Sigmoid colon (tissue), 7 donors: ENCODE measurements at regions of chr11 and their contacts with region 1.

Region 1: DNA sequence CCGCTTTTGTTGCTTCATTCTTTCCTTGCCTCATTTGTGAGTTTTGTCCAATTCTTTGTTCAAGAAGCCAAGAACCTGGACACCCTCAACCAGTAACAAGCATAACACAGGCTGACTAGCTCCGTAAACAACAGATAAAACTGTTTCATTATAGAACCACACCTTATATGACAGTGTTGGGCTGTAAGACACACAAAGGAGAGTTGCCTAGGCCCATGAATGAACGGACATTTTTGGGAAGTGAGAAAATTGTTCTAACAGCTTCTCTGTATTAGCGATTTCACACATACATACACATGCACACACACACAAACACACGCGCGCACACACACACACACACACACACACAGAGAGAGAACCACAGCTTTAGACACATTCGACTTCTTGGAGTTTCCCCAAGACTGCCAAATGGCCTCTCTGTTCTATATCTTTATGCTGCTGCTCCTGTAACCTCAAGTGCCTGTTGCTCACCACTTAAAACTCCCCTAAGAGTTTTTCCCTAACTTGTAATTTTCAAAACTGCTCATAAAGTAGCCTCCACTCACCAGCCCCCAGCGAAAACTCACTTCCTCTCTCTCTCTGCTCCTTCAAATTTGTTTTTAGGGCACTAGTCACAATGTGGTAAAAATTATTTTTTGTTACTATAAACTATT is 35.9 kb downstream of the CTSC start:
- DNase-seq: no peak
- H3K4me3 ChIP-seq: no peak overlapping the region
- H3K27ac ChIP-seq: peak overlapping the region in 3 of 4 donors; percentile 77 to 83 (median 83)
- H3K4me1 ChIP-seq: peaks cover 0 to 66% (median 40%) of the 10 kb centered on the region in 4 donors
- H3K27me3 ChIP-seq: no peaks in the 10 kb centered on the region
- CTCF ChIP-seq: no peak
- EP300 ChIP-seq: peak; percentile 71 to 95 (median 86)
- POLR2A ChIP-seq: no peak

Region 2: GRCh38 chr11:87463486-87464102 is 838.0 kb before region 1 on chr11:
- intact Hi-C with region 1: loop called (anchors 10 kb)
- DNase-seq: no peak
- H3K4me3 ChIP-seq: no peak overlapping the region
- H3K27ac ChIP-seq: no peak overlapping the region
- H3K4me1 ChIP-seq: peaks cover 0 to 25% (median 19%) of the 10 kb centered on the region in 4 donors
- H3K27me3 ChIP-seq: no peaks in the 10 kb centered on the region
- CTCF ChIP-seq: peak in 1 of 4 experiments; percentile 19
- EP300 ChIP-seq: no peak
- POLR2A ChIP-seq: no peak

Region 3: DNA sequence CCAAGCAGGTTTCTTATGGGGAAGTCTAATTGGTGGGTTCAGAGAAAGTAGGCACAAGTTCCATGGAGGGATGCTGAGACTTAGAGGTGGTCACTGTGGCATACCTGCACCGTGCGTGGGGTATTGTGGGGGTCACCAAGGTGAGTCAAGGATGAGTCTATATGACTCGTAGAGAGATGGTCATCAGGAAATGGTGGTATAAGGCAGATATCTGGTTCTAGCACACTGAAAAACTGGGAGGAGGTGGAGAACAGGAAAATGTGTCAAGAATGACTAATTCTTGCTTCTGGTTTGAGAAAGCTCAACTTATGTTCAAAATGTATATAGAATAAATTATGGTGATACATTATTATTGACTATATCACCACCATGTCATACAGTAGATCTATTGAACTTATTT is 384.5 kb before region 1 on chr11:
- intact Hi-C with region 1: no loop called
- DNase-seq: no peak
- H3K4me3 ChIP-seq: no peak overlapping the region
- H3K27ac ChIP-seq: no peak overlapping the region
- H3K4me1 ChIP-seq: no peaks in the 10 kb centered on the region
- H3K27me3 ChIP-seq: no peaks in the 10 kb centered on the region
- CTCF ChIP-seq: no peak
- EP300 ChIP-seq: no peak
- POLR2A ChIP-seq: no peak

Region 4: GRCh38 chr11:88087337-88087736 is 214.3 kb before region 1 on chr11:
- intact Hi-C with region 1: no loop called
- DNase-seq: no peak
- H3K4me3 ChIP-seq: no peak overlapping the region
- H3K27ac ChIP-seq: no peak overlapping the region
- H3K4me1 ChIP-seq: peaks cover 0 to 15% (median 0%) of the 10 kb centered on the region in 4 donors
- H3K27me3 ChIP-seq: no peaks in the 10 kb centered on the region
- CTCF ChIP-seq: no peak
- EP300 ChIP-seq: no peak
- POLR2A ChIP-seq: no peak

Region 5: DNA sequence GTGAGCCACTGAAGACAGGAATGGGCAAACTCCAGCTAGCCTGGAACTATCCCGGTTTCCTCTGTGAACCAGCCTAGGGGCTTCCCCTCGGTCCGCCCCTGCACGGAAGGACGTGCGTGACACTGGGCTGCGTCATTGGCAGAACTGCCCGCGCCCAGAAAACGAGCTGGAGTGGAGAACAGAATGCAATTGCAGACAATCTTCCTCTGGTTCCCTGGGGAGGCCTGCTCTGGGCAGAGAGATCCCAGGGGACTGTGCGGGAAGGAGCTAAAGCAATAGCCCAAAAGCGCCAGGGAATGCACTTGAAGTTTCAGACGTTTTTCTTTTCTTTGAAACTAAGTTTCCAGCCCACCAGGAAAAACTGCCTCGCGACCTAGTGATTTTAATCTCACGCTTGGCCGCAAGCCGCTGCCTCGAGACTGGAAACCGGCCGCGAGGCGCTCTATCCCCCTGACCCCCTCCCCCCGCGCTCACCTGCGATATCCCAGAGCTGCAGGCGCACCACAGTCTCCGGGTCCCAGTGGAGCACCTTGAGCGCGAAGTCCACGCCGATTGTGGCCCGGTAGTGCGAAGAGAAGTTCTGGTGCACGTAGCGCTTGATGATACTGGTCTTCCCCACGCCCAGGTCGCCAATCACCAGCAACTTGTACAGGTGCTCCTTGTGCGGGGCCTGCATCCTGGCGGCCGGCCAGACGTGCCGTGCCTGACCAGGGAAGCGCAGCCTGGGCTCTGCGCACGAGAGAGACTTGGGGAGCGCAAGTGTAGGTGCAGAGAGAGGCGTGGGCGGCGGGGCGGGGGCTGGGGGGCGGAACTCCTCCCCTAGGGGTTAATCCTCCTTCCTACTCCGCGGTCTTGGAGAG is 126.7 kb before region 1 on chr11 and contains the start of gene RAB38:
- intact Hi-C with region 1: loop called (anchors 5 kb)
- DNase-seq: peak; percentile 85
- H3K4me3 ChIP-seq: peak within 1 kb of the TSS; percentile 15 to 49 (median 44)
- H3K27ac ChIP-seq: peak within 1 kb of the TSS; percentile 0 to 60 (median 27)
- H3K4me1 ChIP-seq: peaks cover 0 to 36% (median 32%) of the 10 kb centered on the region in 4 donors
- H3K27me3 ChIP-seq: no peaks in the 10 kb centered on the region
- CTCF ChIP-seq: no peak
- EP300 ChIP-seq: no peak
- POLR2A ChIP-seq: peak in 1 of 2 donors; percentile 14
- total RNA-seq, gene RAB38: 1.1 to 1.7 (median 1.2) TPM in 3 of 4 donors, not detected in the other

Region 6: GRCh38 chr11:88337181-88337986 is 35.8 kb after region 1 on chr11 and contains the start of gene CTSC:
- intact Hi-C with region 1: loop called (anchors 5 kb)
- DNase-seq: peak; percentile 96
- H3K4me3 ChIP-seq: peak within 1 kb of the TSS; percentile 64 to 80 (median 77)
- H3K27ac ChIP-seq: peak within 1 kb of the TSS; percentile 79 to 87 (median 83)
- H3K4me1 ChIP-seq: peaks cover 0 to 21% (median 7%) of the 10 kb centered on the region in 4 donors
- H3K27me3 ChIP-seq: no peaks in the 10 kb centered on the region
- CTCF ChIP-seq: no peak
- EP300 ChIP-seq: no peak
- POLR2A ChIP-seq: peak; percentile 17 to 53
- total RNA-seq, gene CTSC: 28.0 to 49.9 (median 45.0) TPM

Region 7: DNA sequence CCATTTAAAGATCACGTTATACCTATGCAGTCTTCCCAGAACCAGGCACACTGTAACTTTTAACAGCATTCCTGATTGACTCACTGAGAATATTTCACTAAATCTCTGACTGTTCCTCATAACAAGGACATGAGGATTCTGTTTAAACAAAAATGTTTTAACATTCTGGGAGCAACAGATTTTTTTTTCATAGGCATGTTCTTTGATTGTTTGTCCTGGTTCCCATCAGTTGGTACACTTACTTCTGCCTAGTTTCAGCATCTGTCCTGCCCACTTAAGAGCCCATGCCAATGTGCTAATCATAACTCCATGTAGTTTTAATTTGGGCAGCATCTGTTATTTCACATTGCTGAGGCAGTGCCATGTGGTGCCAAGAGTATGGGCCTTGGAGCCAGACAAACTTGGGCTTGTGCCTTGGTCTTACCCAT is 174.4 kb after region 1 on chr11:
- intact Hi-C with region 1: loop called (anchors 5 kb)
- DNase-seq: peak; percentile 67
- H3K4me3 ChIP-seq: no peak overlapping the region
- H3K27ac ChIP-seq: peak overlapping the region in 1 of 4 donors; percentile 61
- H3K4me1 ChIP-seq: peaks cover 0 to 52% (median 43%) of the 10 kb centered on the region in 4 donors
- H3K27me3 ChIP-seq: no peaks in the 10 kb centered on the region
- CTCF ChIP-seq: no peak
- EP300 ChIP-seq: peak in 2 of 4 donors; percentile 38 to 45
- POLR2A ChIP-seq: no peak